Colonic mucosa (tissue), 4 donors: ENCODE measurements at regions of chr6 and their contacts with region 1.

Region 1: DNA sequence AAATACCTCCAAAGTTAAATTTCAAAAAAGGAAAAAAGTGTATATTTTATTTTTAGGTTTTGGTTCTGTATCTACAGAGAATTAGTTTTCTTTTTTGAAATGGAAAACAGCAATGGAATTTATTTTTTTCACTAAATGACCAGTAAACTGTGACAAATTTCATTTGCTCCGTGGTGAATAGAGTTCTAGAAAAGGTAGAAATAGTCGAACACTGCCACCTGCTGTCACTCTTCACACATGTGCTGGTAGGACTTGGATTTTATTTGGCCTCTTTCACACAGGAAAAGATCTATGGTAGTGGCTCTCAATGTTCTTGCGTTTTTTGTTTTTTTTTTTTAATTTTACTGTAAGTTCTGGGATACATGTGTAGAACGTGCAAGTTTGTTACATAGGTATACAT is 312.5 kb downstream of the EYA4 start:
- DNase-seq: peak; percentile 34
- H3K4me3 ChIP-seq: no peak overlapping the region
- H3K27ac ChIP-seq: no peak overlapping the region
- H3K4me1 ChIP-seq: no peaks in the 10 kb centered on the region
- H3K27me3 ChIP-seq: no peaks in the 10 kb centered on the region
- CTCF ChIP-seq: peak; percentile 24

Region 2: DNA sequence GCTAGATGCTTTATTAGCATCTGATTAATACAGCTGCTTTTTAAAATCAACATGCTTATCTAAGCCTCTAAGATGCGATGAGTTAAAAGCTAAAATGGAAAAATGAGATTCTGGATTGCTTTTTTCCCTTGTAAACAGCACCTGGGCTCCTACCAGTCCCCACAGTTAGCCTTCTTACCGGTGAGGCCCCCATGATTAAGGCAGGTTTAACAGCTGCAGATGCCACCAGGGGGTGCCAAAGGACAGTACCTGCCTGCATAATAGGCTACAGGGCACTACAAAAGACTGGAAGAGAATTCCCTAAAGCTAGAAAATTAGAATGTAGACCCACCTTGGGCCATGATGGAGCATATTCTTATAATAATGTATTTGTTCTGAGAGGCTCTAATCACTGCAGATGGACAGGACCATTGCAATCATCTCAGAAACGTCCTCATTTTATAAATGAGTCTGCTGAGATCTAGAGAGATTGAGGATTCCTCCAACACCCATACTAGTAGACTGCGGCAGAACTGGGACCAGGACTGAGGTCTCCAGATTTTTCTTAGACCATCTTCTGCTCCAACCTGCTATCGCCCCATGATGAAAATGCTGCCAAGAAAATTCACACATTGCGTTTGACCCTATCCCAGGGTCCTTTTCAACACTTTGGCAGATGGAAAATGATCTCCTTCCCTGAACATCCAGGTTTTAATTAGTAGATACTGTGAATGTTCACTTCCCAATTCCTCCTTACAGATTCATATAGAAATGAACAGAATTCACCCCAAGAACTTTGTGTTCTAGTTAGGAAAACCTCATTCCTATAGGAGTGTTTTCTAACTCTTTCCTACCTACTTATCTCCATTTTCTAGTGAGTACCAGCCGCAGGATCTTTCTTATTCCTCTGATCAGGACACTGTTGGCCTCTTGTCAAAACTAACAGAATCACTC is 590.5 kb before region 1 on chr6:
- intact Hi-C with region 1: loop called (anchors 10 kb)
- DNase-seq: peak; percentile 69
- H3K4me3 ChIP-seq: no peak overlapping the region
- H3K27ac ChIP-seq: no peak overlapping the region
- H3K4me1 ChIP-seq: no peaks in the 10 kb centered on the region
- H3K27me3 ChIP-seq: no peaks in the 10 kb centered on the region
- CTCF ChIP-seq: peak; percentile 70